Caco-2 (cell line): ENCODE measurements at regions of chr15 and their contacts with region 1.

Region 1: DNA sequence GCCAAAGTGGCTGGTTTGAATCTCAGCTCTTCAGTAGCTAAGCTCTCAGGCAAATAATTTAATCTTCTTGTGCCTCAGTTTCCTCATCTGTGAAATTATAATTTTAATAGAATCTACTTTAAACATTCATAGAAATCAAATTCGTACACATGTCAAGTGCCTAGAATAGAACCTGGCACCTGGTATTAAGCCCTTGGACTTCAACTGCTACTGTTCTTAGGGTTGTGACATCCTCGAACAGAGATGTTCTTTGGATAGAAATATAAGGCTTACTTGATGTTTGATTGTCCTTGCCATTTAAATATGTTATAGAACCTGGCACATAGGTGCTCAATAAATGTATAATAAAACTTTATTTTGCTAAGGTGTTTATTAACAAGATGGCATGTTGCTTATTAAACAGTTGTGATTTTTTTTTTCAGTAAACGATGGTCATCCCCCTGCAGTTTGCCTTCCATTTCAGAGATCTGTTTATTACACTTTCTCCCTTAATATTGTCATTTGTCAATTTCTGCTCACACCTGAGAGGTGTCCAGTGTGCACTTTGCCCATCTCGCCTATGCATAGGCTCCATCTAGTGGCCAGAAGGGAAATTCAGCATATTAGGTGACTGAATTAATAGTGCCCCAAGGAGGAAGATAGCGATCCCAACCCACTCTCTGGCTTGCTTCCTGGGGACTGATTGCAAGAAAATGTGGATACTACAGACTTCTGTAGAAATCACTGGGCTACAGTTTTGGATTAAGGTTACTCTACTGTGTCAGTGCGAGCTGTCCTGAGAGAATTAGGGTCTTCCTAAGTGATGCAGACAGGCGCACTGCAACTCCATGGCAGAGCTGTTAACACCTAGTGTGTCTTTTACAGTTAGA is 10.7 kb downstream of the IGF1R start:
- DNase-seq: peak in 1 of 2 experiments; percentile 63
- H3K4me3 ChIP-seq: no peak overlapping the region
- H3K4me3 Mint-ChIP-seq: no peak overlapping the region
- H3K27ac Mint-ChIP-seq: no peak overlapping the region
- H3K4me1 ChIP-seq: peaks cover 12% of the 10 kb centered on the region; the same call in 1 of the 2 replicates
- H3K4me1 Mint-ChIP-seq: peaks cover 20% of the 10 kb centered on the region
- H3K27me3 ChIP-seq: no peaks in the 10 kb centered on the region
- H3K27me3 Mint-ChIP-seq: no peaks in the 10 kb centered on the region
- CTCF ChIP-seq: peak; percentile 79 to 81

Region 2: GRCh38 chr15:98442379-98442833 is 216.7 kb before region 1 on chr15:
- CTCF ChIA-PET with region 1: no interaction called
- POLR2A ChIA-PET with region 1: no interaction called
- intact Hi-C with region 1: loop called (anchors 1 kb)
- DNase-seq: peak; percentile 69 to 70
- H3K4me3 ChIP-seq: no peak overlapping the region
- H3K4me3 Mint-ChIP-seq: no peak overlapping the region
- H3K27ac Mint-ChIP-seq: no peak overlapping the region
- H3K4me1 ChIP-seq: no peaks in the 10 kb centered on the region
- H3K4me1 Mint-ChIP-seq: no peaks in the 10 kb centered on the region
- H3K27me3 ChIP-seq: no peaks in the 10 kb centered on the region; the same call in 1 of the 2 replicates
- H3K27me3 Mint-ChIP-seq: peaks cover 19% of the 10 kb centered on the region
- CTCF ChIP-seq: peak; percentile 74 to 78

Region 3: DNA sequence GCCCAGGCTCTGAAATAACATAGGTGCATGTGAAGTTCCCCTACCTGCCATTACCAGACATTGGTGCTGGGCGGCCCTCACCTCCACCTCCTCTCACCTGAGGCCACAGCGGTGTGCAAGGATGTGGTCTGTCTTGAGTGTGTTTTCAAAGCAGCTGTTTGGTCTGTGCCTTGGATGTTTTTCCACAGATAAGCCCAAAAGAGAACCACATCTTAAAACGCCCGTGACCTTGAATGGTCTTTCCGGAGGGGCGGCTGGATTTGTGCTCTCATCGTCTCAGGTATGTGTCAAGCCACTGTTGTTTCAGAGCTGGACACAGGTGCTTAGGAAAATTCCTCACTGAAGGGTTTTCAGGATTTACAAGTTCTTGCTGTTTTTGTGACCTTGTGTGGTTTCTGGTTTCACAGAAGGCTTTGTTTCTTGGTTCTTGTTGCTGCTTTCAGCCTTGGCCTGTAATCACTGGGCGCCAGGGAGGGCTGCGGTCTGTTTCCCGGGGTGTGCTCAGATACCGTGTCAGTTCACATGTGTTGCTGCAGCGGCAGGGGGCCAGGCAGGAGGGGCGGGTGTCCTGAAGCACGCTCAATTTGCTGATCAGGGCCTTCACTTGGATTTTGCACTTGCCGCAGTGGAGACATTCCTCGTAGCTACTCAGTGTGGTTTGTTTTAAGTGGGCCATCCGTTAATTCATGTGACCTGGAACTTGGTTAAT is 117.7 kb after region 1 on chr15:
- CTCF ChIA-PET with region 1: no interaction called
- POLR2A ChIA-PET with region 1: no interaction called
- intact Hi-C with region 1: no loop called
- DNase-seq: no peak
- H3K4me3 ChIP-seq: no peak overlapping the region
- H3K4me3 Mint-ChIP-seq: no peak overlapping the region
- H3K27ac Mint-ChIP-seq: peak overlapping the region; percentile 50
- H3K4me1 ChIP-seq: peaks cover 3% of the 10 kb centered on the region
- H3K4me1 Mint-ChIP-seq: peaks cover 20% of the 10 kb centered on the region
- H3K27me3 ChIP-seq: no peaks in the 10 kb centered on the region
- H3K27me3 Mint-ChIP-seq: no peaks in the 10 kb centered on the region
- CTCF ChIP-seq: no peak

Region 4: DNA sequence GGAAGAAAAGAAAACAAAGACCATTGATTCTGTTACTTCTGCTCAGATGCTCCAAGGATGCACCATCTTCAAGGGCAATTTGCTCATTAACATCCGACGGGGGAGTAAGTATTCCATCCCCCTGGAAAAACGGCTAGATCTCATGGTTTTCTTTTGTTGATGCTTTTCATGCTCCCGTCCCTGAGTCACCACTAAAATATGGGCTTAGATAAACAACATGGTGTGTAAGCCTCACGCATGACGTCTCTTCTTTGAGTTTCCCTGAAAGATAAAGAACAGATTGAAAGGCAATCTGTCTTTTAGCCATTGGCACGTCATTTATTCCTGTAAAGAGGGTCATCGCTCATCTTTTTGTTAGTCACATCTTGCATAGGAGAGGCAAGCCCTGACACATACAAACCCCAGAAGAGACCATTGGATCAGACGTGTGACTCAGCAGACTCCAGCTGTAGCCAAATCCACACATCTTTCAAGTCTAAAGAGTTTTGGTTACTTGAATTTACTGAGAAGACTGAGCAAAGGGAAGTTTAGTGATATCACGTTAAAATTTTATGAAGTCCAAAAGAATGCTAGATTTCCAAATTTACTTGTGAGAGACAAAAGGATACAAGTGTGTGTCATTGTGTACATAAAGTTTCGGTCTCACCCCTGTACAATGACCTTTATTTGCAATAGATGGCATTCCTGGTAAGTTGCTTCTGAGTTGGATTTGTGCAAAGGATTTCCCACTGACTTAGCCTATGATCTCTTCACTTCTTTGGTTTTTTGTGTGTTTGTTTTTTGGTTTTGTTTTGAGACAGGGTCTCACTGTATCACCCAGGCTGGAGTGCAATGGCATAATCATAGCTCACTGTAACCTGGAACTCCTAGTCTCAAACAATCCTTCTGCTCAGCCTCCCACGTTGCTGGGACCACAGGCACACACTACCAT is 238.0 kb after region 1 on chr15:
- CTCF ChIA-PET with region 1: no interaction called
- POLR2A ChIA-PET with region 1: no interaction called
- intact Hi-C with region 1: no loop called
- DNase-seq: peak; percentile 70 to 76
- H3K4me3 ChIP-seq: no peak overlapping the region
- H3K4me3 Mint-ChIP-seq: peak overlapping the region; percentile 66
- H3K27ac Mint-ChIP-seq: peak overlapping the region; percentile 95
- H3K4me1 ChIP-seq: peaks cover 57% of the 10 kb centered on the region
- H3K4me1 Mint-ChIP-seq: peaks cover 40% of the 10 kb centered on the region
- H3K27me3 ChIP-seq: no peaks in the 10 kb centered on the region
- H3K27me3 Mint-ChIP-seq: no peaks in the 10 kb centered on the region
- CTCF ChIP-seq: no peak